HCT116 (cell line): ENCODE measurements at regions of chr17 and their contacts with region 1.

Region 1: DNA sequence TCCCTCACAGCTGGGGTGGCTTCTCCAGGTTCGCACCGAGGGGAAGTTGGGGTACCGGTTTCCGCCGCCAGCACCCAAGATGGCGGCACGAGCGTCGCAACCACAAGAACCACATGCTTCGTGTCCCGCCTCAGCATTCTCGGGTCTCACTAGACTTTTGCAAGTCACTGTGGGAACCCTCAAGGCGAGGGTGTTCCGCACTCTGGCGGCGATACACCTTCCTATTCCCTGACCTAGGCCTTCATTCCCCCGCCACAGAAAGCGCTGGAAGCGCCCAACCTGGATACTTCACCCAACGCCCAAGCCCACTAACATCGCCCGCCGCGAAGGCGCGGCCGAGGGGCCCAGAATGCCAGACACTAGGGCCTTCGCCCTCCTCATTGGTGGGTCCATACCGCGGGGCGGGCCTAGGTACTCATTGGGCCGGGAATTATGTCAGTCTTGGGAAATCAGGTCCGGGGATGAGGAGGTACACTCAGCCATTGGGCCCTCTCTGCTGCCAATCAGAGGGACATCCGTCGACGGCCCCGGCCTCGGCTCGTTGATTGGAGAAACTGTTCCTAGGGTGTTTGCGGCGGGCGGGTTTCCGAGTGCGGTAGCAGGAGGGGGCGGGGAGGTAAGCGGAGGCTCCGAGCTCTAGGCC is at the start of gene NFE2L1:
- DNase-seq: peak; percentile 100
- ATAC-seq: peak; percentile 91
- H3K4me3 ChIP-seq: peak within 1 kb of the TSS; percentile 64 to 67
- H3K27ac ChIP-seq: peak within 1 kb of the TSS; percentile 90
- H3K4me1 ChIP-seq: peaks cover 25 to 52% of the 10 kb centered on the region in 2 experiments
- H3K27me3 ChIP-seq: no peaks in the 10 kb centered on the region
- CTCF ChIP-seq: no peak
- POLR2A ChIP-seq: peak; percentile 71
- RAD21 ChIP-seq: no peak
- total RNA-seq, gene NFE2L1: 135 TPM

Region 2: DNA sequence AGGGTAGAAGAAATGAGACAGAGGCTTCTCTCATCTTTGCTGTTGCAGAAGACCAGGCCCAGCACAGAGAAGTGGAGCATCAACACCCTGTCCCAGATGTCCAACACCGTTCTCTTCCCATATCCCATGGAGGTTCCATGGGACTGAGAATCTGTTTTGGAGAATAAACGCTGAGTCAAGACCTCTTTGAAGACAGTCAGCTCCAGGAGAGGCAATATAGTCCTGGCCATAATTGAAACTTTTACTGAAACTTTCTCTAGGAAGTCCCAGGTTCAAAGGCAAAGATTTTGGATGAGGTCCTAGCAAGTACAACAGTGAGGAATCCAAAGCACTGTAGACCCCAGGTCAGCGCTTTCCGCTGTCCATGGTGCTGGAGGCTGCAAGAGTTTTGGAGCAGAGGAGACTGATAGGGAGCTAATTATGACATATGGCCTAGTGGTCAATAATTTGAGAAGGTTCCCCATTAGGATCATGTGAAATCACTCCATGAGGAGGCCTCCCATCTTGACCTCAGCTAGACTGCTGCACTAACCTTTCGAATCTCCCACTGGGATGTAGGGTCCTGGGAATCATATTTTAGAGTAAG is 262.2 kb before region 1 on chr17:
- CTCF ChIA-PET with region 1: no interaction called
- POLR2A ChIA-PET with region 1: no interaction called
- RAD21 ChIA-PET with region 1: no interaction called
- intact Hi-C with region 1: no loop called
- DNase-seq: no peak
- ATAC-seq: no peak
- H3K4me3 ChIP-seq: no peak overlapping the region
- H3K27ac ChIP-seq: no peak overlapping the region
- H3K4me1 ChIP-seq: peaks cover 0 to 4% of the 10 kb centered on the region in 2 experiments; a peak in 1 of 4 replicates
- H3K27me3 ChIP-seq: peaks cover 37% of the 10 kb centered on the region
- CTCF ChIP-seq: no peak
- POLR2A ChIP-seq: no peak
- RAD21 ChIP-seq: no peak

Region 3: DNA sequence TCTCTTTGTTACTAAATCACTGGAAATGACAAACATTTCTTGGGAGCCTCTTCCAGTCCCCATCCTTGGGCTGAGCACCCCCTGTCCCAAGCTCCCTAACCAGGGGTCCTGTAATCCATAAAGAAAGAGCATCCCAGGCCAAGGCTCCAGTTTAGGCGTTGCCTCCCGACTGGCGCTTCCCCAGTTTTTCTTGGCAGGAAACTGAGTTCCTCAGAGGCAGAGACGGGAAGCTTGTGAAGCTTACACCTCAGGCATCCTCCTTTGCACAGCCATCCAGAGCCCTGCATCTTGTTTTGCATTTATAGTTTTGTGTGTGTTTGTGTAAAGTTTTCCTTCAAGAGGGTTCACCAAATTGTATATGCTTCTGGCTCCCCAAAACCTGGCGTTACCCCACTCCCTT is 17.3 kb before region 1 on chr17:
- CTCF ChIA-PET with region 1: interaction called, 38 read pairs
- POLR2A ChIA-PET with region 1: interaction called, 45 read pairs
- RAD21 ChIA-PET with region 1: interaction called, 13 to 15 read pairs
- intact Hi-C with region 1: loop called (anchors 2 kb)
- DNase-seq: no peak
- ATAC-seq: no peak
- H3K4me3 ChIP-seq: no peak overlapping the region
- H3K27ac ChIP-seq: no peak overlapping the region
- H3K4me1 ChIP-seq: peaks cover 14 to 18% of the 10 kb centered on the region in 2 experiments
- H3K27me3 ChIP-seq: no peaks in the 10 kb centered on the region
- CTCF ChIP-seq: no peak
- POLR2A ChIP-seq: no peak
- RAD21 ChIP-seq: no peak

Region 4: GRCh38 chr17:48068491-48068961 is 20.7 kb after region 1 on chr17:
- CTCF ChIA-PET with region 1: interaction called, 4 read pairs
- POLR2A ChIA-PET with region 1: interaction called, 114 read pairs
- RAD21 ChIA-PET with region 1: interaction called in 1 of 2 experiments, 3 read pairs
- intact Hi-C with region 1: no loop called
- DNase-seq: no peak
- ATAC-seq: peak; percentile 88
- H3K4me3 ChIP-seq: no peak overlapping the region
- H3K27ac ChIP-seq: no peak overlapping the region
- H3K4me1 ChIP-seq: no peaks in the 10 kb centered on the region
- H3K27me3 ChIP-seq: no peaks in the 10 kb centered on the region
- CTCF ChIP-seq: peak in 2 of 3 experiments; percentile 64 to 66; a peak in 4 of 6 replicates
- POLR2A ChIP-seq: no peak
- RAD21 ChIP-seq: peak; percentile 27; the same call in 1 of the 2 replicates

Region 5: GRCh38 chr17:48101012-48101720 is 53.3 kb after region 1 on chr17 and contains the start of gene CBX1:
- CTCF ChIA-PET with region 1: no interaction called
- POLR2A ChIA-PET with region 1: interaction called, 14 read pairs
- RAD21 ChIA-PET with region 1: no interaction called
- intact Hi-C with region 1: no loop called
- DNase-seq: peak; percentile 94
- ATAC-seq: peak; percentile 92
- H3K4me3 ChIP-seq: peak within 1 kb of the TSS; percentile 93 to 94
- H3K27ac ChIP-seq: peak within 1 kb of the TSS; percentile 95
- H3K4me1 ChIP-seq: peaks cover 10 to 29% of the 10 kb centered on the region in 2 experiments
- H3K27me3 ChIP-seq: no peaks in the 10 kb centered on the region
- CTCF ChIP-seq: no peak
- POLR2A ChIP-seq: peak; percentile 67
- RAD21 ChIP-seq: no peak
- total RNA-seq, gene CBX1: 136 TPM

Region 6: DNA sequence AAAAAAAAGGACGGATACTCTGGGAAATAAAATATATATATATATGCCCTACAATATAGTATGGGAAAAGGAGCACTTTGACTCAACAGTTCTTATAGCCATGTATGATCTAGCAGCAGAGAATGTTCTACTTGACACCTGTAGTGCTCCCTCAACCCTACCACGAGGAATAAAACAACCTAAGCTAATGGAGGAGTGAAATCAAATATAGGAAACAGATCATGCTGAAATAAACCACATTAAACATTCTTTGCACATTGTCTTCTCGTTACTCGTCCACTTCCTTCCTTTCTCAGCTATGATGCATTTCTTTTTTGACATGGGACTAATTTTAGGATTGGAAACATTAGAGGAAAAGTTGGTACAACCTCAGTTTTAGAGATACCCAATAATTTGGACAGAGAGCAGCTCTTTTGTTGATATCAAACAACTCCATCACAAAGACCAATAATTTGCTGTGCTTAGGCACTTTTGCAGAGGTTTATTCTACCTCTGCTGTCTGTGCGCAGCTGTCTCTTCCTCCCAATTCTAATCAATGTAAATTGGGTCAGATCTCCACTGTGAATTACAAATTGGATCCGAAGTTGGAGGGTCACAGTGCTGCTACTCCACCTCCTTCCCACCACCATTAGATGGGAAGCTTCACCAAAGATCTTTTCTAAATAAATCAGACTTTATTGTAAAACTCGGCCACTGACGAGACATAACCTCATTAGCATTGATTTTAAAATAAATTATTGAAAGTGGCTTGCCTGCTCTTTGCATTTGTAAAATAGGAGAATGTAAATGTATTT is 125.5 kb after region 1 on chr17:
- CTCF ChIA-PET with region 1: no interaction called
- POLR2A ChIA-PET with region 1: interaction called, 11 read pairs
- RAD21 ChIA-PET with region 1: interaction called in 1 of 2 experiments, 3 read pairs
- intact Hi-C with region 1: no loop called
- DNase-seq: no peak
- ATAC-seq: no peak
- H3K4me3 ChIP-seq: no peak overlapping the region
- H3K27ac ChIP-seq: no peak overlapping the region
- H3K4me1 ChIP-seq: no peaks in the 10 kb centered on the region
- H3K27me3 ChIP-seq: no peaks in the 10 kb centered on the region
- CTCF ChIP-seq: no peak
- POLR2A ChIP-seq: no peak
- RAD21 ChIP-seq: no peak